PC-9 (cell line): ENCODE measurements at regions of chr6 and their contacts with region 1.

Region 1: GRCh38 chr6:45991189-45991588 is 24.5 kb downstream of the CLIC5 start:
- DNase-seq: no peak
- H3K4me3 ChIP-seq: no peak overlapping the region
- H3K27ac ChIP-seq: no peak overlapping the region
- H3K4me1 ChIP-seq: no peaks in the 10 kb centered on the region
- H3K27me3 ChIP-seq: no peaks in the 10 kb centered on the region
- CTCF ChIP-seq: no peak; the same call in 1 of the 2 replicates

Region 2: DNA sequence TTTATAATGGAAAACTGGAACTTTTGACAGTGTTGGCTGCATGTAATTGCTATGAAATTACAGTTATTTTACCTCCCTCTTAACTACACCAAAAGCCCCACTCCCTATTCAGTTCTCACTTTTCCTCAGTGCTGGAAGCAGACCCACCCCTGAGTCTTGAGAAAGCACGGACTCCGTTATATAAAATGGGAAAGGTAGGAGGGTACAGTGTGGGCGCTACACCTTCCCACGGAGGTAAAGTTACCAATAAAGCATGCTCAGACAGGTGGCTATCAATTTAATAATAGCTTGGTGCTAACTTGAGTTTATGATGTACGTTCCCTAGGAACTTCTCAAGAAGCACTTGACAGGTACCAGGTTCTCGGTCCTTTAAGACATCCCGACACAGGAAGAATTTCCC is 34.5 kb before region 1 on chr6:
- CTCF ChIA-PET with region 1: interaction called, 12 read pairs
- POLR2A ChIA-PET with region 1: no interaction called
- intact Hi-C with region 1: no loop called
- DNase-seq: no peak
- H3K4me3 ChIP-seq: no peak overlapping the region
- H3K27ac ChIP-seq: no peak overlapping the region
- H3K4me1 ChIP-seq: no peaks in the 10 kb centered on the region
- H3K27me3 ChIP-seq: peaks cover 3% of the 10 kb centered on the region; the same call in 1 of the 2 replicates
- CTCF ChIP-seq: no peak